ENCODE measurements at regions of chr3 and their contacts with region 1.

Region 1: GRCh38 chr3:128794770-128795649 is 69.0 kb downstream of the RAB7A start:
- DNase-seq: peak; percentile 43 to 54
- ATAC-seq: peak; percentile 96

Region 2: GRCh38 chr3:128307029-128307633 is 487.9 kb before region 1 on chr3:
- intact Hi-C with region 1: no loop called
- DNase-seq: no peak
- ATAC-seq: peak; percentile 74

Region 3: DNA sequence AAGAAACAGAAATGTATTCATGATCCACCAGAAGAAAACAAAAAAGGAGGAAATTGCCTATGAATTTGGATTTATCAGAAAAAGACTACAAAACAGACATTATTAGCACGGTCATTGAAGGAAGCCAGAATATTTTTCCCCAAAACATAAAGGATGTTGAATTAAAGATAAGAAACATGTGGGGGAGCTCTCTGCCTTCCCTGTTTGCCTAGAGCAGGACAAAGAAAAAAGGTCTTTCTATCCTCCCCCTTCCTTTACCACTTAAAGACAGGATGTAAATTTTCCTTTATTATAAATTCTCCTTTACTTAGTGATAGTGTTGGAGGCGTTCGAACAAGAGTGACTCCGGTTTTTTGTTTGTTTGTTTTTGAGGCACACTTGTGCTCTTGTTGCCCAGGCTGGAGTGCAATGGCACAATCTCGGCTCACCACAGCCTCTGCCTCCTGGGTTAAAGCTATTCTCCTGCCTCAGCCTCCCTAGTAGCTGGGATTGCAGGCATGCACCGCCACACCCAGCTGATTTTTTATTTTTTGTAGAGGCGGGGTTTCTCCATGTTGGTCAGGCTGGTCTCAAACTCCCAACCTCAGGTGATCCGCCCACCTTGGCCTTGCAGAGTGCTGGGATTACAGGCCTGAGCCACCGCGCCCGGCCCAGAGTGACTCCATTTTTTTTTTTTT is 129.5 kb before region 1 on chr3:
- intact Hi-C with region 1: no loop called
- DNase-seq: no peak
- ATAC-seq: no peak

Region 4: DNA sequence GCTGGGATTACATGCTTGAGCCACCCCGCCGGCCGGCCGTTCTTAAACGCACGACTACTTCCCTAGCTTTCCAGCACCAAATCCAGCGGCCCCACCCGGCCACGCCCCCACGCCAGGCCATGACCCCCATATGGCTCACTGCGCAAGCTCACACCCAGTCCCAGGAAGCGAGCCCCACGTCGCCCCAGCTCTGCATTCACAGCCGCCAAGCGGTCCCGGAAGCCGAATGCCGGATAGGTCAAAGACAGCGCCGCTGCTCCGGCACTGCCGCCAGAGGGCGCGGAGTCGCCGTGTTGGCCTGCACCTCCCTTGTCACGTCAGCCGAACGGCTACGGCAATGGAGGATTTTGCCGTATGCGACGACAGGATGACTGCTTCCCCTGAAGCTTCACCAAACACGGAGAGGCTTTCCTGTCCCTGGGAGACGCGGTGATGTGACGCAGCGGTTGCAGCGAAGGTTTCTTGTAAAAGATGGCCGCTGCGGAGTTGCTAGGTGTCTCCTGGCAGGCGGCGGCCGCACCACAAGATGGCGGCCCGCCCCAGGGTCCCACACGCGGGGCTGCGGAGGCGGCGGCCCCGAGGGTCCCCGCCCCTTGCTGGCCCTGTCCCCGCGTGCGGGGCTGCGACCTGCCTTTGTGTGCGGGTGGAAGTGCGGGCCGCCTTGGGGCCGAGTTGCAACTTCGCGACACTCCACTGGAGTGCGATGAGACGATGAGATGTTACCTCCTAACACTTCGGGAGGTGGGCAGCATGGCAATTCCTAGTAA is 114.2 kb before region 1 on chr3:
- intact Hi-C with region 1: loop called in 1 of 2 experiments (anchors 5 kb)
- DNase-seq: peak; percentile 99
- ATAC-seq: peak; percentile 98

Region 5: GRCh38 chr3:129663026-129663446 is 868.0 kb after region 1 on chr3:
- intact Hi-C with region 1: no loop called
- DNase-seq: no peak
- ATAC-seq: peak; percentile 73